CD4-positive, alpha-beta T cell (primary cell): ENCODE measurements at regions of chr2 and their contacts with region 1.

Region 1: DNA sequence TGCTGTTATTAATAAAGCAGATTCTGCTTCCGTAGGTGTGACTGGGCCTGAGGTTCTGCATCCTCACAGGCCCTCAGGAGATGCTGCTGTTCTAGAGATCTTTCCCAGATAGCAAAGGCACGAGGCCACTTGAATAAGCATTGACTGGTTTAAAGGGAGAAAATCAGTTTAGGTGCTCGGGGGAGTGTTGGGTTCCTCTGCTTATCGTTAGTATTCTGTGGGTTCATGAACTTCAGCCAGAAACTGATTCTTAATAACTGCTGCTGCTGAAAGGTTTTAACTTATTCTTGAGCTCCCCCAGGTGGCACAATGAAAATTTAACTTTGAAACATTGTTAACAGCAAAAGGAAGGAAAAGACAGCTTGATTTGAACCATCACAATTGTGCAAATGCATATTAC is 56.9 kb downstream of the ITGA6 start:
- DNase-seq: peak in 4 of 14 experiments; percentile 32 to 62 (median 54)
- ATAC-seq: peak; percentile 74
- H3K4me3 ChIP-seq: no peak overlapping the region
- H3K4me3 Mint-ChIP-seq: peak overlapping the region; percentile 34
- H3K27ac ChIP-seq: no peak overlapping the region
- H3K27ac Mint-ChIP-seq: peak overlapping the region; percentile 71
- H3K4me1 ChIP-seq: peaks cover 15% of the 10 kb centered on the region
- H3K4me1 Mint-ChIP-seq: peaks cover 52% of the 10 kb centered on the region
- H3K27me3 ChIP-seq: no peaks in the 10 kb centered on the region
- H3K27me3 Mint-ChIP-seq: no peaks in the 10 kb centered on the region
- CTCF ChIP-seq: peak; percentile 68

Region 2: DNA sequence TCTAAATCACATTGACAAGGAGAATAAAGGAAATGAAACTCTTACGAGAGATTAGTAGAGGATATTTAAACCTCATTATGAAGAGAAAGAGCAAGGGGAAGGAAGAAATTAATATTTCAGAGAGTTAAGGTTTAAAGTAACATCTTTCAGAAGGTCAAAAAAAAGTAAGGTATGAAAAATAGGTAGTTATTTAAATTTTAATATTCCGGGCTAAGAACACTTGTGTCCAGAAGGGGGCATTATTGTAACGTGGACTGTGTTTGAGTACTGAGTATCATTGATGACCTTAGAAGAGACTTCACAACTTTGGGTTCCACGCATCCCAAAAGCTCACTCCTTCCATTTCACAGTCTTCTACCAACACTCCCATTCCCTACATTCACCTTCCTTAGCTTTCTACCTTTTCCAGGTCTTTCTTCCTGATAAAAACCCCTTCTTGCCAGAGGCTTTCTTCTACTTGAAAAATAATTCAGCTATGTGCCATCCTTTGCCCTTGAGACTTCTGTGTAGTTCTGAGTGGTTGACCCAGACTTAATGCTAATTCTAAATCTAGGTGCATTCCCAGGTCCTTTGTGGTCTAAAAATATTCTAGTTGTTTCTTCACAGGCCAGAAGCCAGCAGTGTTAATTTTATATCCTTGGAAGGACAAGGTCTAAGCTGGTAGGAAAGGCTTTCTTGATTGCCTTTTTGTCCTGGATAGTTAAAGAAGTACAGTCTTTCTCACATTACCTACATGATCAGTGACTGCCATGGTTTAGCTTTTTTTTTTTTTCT is 780.5 kb before region 1 on chr2:
- CTCF ChIA-PET with region 1: no interaction called
- POLR2A ChIA-PET with region 1: no interaction called
- intact Hi-C with region 1: loop called (anchors 5 kb)
- DNase-seq: peak in 4 of 14 experiments; percentile 5 to 59 (median 50)
- ATAC-seq: peak; percentile 52
- H3K4me3 ChIP-seq: no peak overlapping the region
- H3K4me3 Mint-ChIP-seq: no peak overlapping the region
- H3K27ac ChIP-seq: no peak overlapping the region
- H3K27ac Mint-ChIP-seq: peak overlapping the region; percentile 11
- H3K4me1 ChIP-seq: no peaks in the 10 kb centered on the region
- H3K4me1 Mint-ChIP-seq: peaks cover 17% of the 10 kb centered on the region
- H3K27me3 ChIP-seq: no peaks in the 10 kb centered on the region
- H3K27me3 Mint-ChIP-seq: no peaks in the 10 kb centered on the region
- CTCF ChIP-seq: peak; percentile 50

Region 3: DNA sequence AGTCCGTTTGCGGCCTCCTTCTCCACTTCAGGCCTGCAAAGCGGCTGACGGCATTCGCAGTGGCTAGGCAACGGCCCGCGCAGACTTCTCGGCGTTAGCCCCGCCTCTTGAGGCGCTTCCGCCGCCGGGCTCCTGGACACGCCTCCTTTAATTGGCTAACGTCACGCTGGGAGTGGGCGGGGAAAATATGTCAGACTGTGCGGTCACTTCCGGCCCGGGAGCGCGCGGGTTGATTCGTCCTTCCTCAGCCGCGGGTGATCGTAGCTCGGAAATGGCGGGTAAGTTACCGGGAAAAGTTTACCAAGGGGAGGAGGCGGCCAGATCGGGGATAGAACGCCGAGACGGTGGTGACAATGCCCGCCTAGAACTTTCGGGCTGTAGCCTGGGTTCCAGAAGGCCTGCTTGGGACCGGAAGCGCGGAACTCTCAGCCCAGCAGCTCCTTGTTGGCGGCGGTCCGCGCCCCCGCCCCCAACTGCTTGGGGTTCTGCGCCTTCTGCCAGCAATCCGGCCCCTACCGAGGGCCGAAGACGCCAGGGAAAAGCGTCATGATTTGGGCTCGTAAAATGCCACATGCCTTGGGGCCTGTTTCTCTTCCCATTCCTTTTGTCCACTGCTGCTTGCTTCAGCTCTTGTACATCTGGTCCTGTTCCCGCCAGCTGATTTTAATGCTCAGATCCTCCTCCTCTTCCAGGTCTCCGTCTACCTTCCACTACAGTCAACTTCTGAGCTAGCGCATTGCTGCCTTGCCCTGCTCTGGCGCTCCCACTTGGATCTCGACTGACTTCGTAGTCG is 561.8 kb before region 1 on chr2 and contains the start of gene HAT1:
- CTCF ChIA-PET with region 1: no interaction called
- POLR2A ChIA-PET with region 1: no interaction called
- intact Hi-C with region 1: loop called in 1 of 2 experiments (anchors 10 kb)
- DNase-seq: peak; percentile 94 to 99 (median 96)
- ATAC-seq: peak; percentile 95
- H3K4me3 ChIP-seq: peak within 1 kb of the TSS; percentile 93
- H3K4me3 Mint-ChIP-seq: peak within 1 kb of the TSS; percentile 100
- H3K27ac ChIP-seq: peak within 1 kb of the TSS; percentile 83 to 96
- H3K27ac Mint-ChIP-seq: peak within 1 kb of the TSS; percentile 93
- H3K4me1 ChIP-seq: peaks cover 18% of the 10 kb centered on the region
- H3K4me1 Mint-ChIP-seq: peaks cover 47% of the 10 kb centered on the region
- H3K27me3 ChIP-seq: no peaks in the 10 kb centered on the region
- H3K27me3 Mint-ChIP-seq: no peaks in the 10 kb centered on the region
- CTCF ChIP-seq: no peak
- total RNA-seq, gene HAT1: 20.3 to 22.6 TPM

Region 4: DNA sequence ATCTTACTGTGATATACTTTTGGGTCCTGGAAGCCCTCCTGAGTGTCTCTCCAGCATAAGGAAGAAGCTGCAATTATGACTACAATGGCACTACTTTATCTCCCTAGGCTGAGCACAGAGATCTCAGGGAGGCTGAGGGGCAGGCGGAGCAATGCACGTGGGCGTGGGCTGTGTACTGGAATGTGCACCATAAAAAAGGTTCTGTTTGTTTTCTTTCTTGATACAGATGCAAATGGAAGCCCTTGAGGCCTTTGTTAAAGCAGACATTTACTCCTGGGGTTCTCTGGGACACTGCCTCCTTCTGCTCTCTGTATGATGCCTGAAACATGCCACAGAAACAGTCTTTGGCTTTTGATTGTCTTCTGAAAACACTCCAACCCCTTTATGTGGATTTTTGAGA is 302.4 kb before region 1 on chr2:
- CTCF ChIA-PET with region 1: no interaction called
- POLR2A ChIA-PET with region 1: no interaction called
- intact Hi-C with region 1: no loop called
- DNase-seq: no peak
- ATAC-seq: no peak
- H3K4me3 ChIP-seq: no peak overlapping the region
- H3K4me3 Mint-ChIP-seq: no peak overlapping the region
- H3K27ac ChIP-seq: no peak overlapping the region
- H3K27ac Mint-ChIP-seq: peak overlapping the region; percentile 15
- H3K4me1 ChIP-seq: peaks cover 13% of the 10 kb centered on the region
- H3K4me1 Mint-ChIP-seq: peaks cover 29% of the 10 kb centered on the region
- H3K27me3 ChIP-seq: no peaks in the 10 kb centered on the region
- H3K27me3 Mint-ChIP-seq: no peaks in the 10 kb centered on the region
- CTCF ChIP-seq: no peak

Region 5: GRCh38 chr2:172496160-172496608 is 11.9 kb after region 1 on chr2:
- CTCF ChIA-PET with region 1: interaction called, 7 read pairs
- POLR2A ChIA-PET with region 1: interaction called, 64 read pairs
- intact Hi-C with region 1: no loop called
- DNase-seq: peak; percentile 17 to 81 (median 51)
- ATAC-seq: peak; percentile 96
- H3K4me3 ChIP-seq: no peak overlapping the region
- H3K4me3 Mint-ChIP-seq: peak overlapping the region; percentile 83
- H3K27ac ChIP-seq: peak overlapping the region; percentile 63 to 73
- H3K27ac Mint-ChIP-seq: peak overlapping the region; percentile 95
- H3K4me1 ChIP-seq: peaks cover 49% of the 10 kb centered on the region
- H3K4me1 Mint-ChIP-seq: peaks cover 81% of the 10 kb centered on the region
- H3K27me3 ChIP-seq: no peaks in the 10 kb centered on the region
- H3K27me3 Mint-ChIP-seq: no peaks in the 10 kb centered on the region
- CTCF ChIP-seq: no peak